ENCODE measurements at regions of chr5 and their contacts with region 1.

Region 1: DNA sequence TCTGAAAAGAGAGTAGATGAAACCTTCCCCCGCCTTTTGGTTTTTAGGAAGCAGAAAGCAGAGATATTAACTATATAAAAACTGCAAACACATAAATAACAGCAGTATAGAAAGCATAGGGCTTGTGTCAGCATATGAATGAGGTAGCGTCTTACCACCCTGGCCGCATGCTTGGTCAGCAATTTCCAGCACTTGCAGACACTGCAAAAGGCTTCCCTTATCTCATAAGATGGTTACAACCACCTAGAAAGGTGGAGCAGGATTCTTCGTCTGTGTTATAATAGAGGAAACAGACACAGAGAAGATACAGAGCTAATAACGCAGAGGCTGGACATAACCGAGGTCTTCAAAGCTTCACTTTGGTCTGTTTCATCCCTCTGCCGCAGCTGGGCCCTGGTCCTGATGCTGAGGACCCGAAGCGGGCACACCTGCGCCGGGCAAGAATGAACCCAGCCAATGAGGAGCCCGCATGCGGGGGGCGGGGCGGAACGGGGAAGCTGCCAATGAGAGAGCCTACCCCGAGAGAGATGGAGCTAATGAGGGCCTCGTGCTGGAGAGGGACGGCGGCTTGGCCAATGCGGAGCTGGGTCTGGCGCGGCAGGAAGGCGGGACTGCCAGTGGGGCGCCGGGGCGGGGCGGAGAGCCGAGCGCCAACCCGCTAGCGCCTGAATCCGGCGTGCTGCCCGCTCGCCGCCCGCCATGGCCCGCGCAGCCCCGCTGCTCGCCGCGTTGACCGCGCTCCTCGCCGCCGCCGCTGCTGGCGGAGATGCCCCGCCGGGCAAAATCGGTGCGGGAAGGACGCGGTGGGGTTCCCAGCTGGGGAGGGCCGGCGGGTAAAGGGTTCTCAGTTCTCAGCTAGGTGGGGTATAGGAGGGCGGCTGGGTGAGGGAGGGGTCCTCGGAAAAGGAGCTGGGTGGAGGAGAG is at the start of gene PCYOX1L:
- DNase-seq: peak; percentile 63
- H3K4me3 ChIP-seq: peak within 1 kb of the TSS; percentile 73
- CTCF ChIP-seq: no peak

Region 2: GRCh38 chr5:149345147-149345875 is 12.3 kb before region 1 on chr5 and contains the start of gene GRPEL2:
- CTCF ChIA-PET with region 1: interaction called, 13 read pairs
- POLR2A ChIA-PET with region 1: interaction called, 19 read pairs
- DNase-seq: peak; percentile 82
- H3K4me3 ChIP-seq: peak within 1 kb of the TSS; percentile 97
- CTCF ChIP-seq: no peak